PC-9 (cell line): ENCODE measurements at regions of chr3 and their contacts with region 1.

Region 1: DNA sequence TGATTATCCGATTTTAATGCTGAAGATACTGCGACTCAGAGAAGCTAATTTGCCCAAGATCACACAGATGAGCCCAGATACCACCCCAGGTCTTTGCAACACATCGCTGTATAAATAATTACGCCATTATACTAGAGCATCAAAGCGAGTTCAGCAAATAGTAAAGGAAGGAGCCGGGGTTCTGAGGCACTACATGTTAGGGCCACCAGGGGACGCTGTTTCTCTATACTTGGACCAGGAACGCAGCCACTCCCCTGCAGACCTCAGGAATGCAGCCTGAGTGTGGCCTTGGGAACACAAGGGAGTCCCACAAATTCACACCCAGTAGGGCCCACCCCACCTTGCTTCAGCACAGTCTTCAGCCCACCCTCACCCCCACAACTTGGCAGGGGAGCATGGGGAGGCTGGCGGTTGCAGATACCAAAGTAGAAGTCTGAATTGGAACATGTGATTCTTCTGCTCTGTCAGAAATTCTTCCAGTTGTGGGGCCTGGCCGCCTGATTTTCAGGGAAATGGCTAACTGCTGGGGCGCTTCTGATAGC is 57.8 kb upstream of the RYK start:
- DNase-seq: peak; percentile 74 to 88
- H3K4me3 ChIP-seq: no peak overlapping the region
- H3K27ac ChIP-seq: peak overlapping the region; percentile 98
- H3K4me1 ChIP-seq: peaks cover 52% of the 10 kb centered on the region
- H3K27me3 ChIP-seq: no peaks in the 10 kb centered on the region
- CTCF ChIP-seq: peak; percentile 99

Region 2: GRCh38 chr3:134212906-134213665 is 95.3 kb before region 1 on chr3:
- CTCF ChIA-PET with region 1: interaction called, 3 read pairs
- POLR2A ChIA-PET with region 1: interaction called, 10 read pairs
- intact Hi-C with region 1: loop called (anchors 1 kb)
- DNase-seq: peak; percentile 71 to 90
- H3K4me3 ChIP-seq: no peak overlapping the region
- H3K27ac ChIP-seq: no peak overlapping the region
- H3K4me1 ChIP-seq: no peaks in the 10 kb centered on the region
- H3K27me3 ChIP-seq: no peaks in the 10 kb centered on the region
- CTCF ChIP-seq: peak; percentile 95

Region 3: GRCh38 chr3:134348524-134348923 is 40.1 kb after region 1 on chr3:
- CTCF ChIA-PET with region 1: interaction called, 3 read pairs
- POLR2A ChIA-PET with region 1: interaction called, 12 read pairs
- intact Hi-C with region 1: loop called (anchors 1 kb)
- DNase-seq: peak; percentile 91 to 96
- H3K4me3 ChIP-seq: no peak overlapping the region
- H3K27ac ChIP-seq: peak overlapping the region; percentile 100
- H3K4me1 ChIP-seq: peaks cover 67% of the 10 kb centered on the region
- H3K27me3 ChIP-seq: no peaks in the 10 kb centered on the region
- CTCF ChIP-seq: no peak

Region 4: GRCh38 chr3:134373994-134374790 is 65.8 kb after region 1 on chr3 and contains the start of gene AMOTL2:
- CTCF ChIA-PET with region 1: interaction called, 5 read pairs
- POLR2A ChIA-PET with region 1: interaction called, 11 read pairs
- intact Hi-C with region 1: loop called (anchors 1 kb)
- DNase-seq: peak; percentile 86 to 98
- H3K4me3 ChIP-seq: peak within 1 kb of the TSS; percentile 100
- H3K27ac ChIP-seq: peak within 1 kb of the TSS; percentile 98
- H3K4me1 ChIP-seq: peaks cover 70% of the 10 kb centered on the region
- H3K27me3 ChIP-seq: no peaks in the 10 kb centered on the region
- CTCF ChIP-seq: no peak
- total RNA-seq, gene AMOTL2: 147 and 221 TPM in 2 replicates

Region 5: DNA sequence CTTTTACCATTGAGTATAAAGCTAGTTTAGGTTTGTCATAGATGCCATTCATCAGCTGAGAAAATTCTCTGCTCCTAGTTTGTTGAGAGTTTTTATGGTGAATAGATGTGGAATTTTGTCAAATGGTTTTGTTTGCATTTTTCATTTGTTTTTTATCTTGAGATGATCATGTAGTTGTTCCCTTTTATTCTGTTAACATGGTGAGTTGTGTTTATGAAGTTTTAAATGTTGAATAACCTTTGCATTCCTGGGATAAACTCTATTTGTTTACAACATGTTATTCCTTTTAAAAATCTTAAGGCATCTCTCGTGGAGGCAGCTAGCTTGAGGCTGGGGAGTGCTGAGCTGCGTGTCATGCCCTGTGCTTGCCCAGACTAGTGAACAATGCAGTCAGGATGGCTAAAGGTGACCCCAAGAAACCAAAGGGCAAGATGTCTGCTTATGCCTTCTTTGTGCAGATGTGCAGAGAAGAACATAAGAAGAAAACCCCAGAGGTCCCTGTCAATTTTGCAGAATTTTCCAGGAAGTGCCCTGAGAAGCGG is 128.9 kb after region 1 on chr3:
- CTCF ChIA-PET with region 1: no interaction called
- POLR2A ChIA-PET with region 1: no interaction called
- intact Hi-C with region 1: no loop called
- DNase-seq: no peak
- H3K4me3 ChIP-seq: no peak overlapping the region
- H3K27ac ChIP-seq: no peak overlapping the region
- H3K4me1 ChIP-seq: 0 out of 2 replicates have a peak, but pooled peaks cover 6% of the 10 kb centered on the region
- H3K27me3 ChIP-seq: no peaks in the 10 kb centered on the region
- CTCF ChIP-seq: no peak

Region 6: GRCh38 chr3:134473868-134474546 is 165.6 kb after region 1 on chr3:
- CTCF ChIA-PET with region 1: interaction called, 12 read pairs
- POLR2A ChIA-PET with region 1: interaction called, 4 read pairs
- intact Hi-C with region 1: loop called (anchors 1 kb)
- DNase-seq: peak; percentile 81 to 82
- H3K4me3 ChIP-seq: no peak overlapping the region
- H3K27ac ChIP-seq: peak overlapping the region; percentile 26
- H3K4me1 ChIP-seq: peaks cover 41% of the 10 kb centered on the region
- H3K27me3 ChIP-seq: no peaks in the 10 kb centered on the region
- CTCF ChIP-seq: peak; percentile 97